Panc1 (cell line): ENCODE measurements at regions of chr17 and their contacts with region 1.

Region 1: GRCh38 chr17:34361478-34362061 is 1.5 kb downstream of the CCL1 start:
- DNase-seq: peak; percentile 78
- ATAC-seq: peak; percentile 97
- H3K4me3 ChIP-seq: no peak overlapping the region
- H3K27ac ChIP-seq: no peak overlapping the region; the same call in 1 of the 2 replicates
- H3K4me1 ChIP-seq: no peaks in the 10 kb centered on the region; the same call in 1 of the 2 replicates
- H3K27me3 ChIP-seq: no peaks in the 10 kb centered on the region
- CTCF ChIP-seq: peak; percentile 99

Region 2: DNA sequence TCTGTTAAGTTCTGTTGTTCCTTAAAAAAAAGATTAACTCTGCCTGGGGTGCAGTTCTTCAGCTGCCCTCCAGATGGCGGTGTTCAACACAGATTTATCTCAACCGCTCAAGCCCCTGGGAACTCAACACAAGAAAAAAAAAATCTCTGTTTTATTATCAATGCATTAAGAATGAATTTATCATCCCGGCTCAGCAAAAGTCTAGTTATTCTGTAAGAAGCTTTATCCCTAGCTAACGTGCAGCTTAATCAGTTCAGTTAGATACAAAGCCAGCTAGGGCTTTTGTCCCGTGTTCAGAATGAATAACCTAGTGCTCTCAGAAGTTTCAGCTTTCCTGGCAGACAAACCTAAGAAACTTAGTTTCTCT is 582.4 kb before region 1 on chr17:
- CTCF ChIA-PET with region 1: no interaction called
- POLR2A ChIA-PET with region 1: no interaction called
- in situ Hi-C with region 1: no loop called
- intact Hi-C with region 1: loop called (anchors 10 kb)
- DNase-seq: peak; percentile 38
- ATAC-seq: peak; percentile 78
- H3K4me3 ChIP-seq: no peak overlapping the region
- H3K27ac ChIP-seq: no peak overlapping the region
- H3K4me1 ChIP-seq: no peaks in the 10 kb centered on the region
- H3K27me3 ChIP-seq: peaks cover 14% of the 10 kb centered on the region
- CTCF ChIP-seq: peak; percentile 90

Region 3: DNA sequence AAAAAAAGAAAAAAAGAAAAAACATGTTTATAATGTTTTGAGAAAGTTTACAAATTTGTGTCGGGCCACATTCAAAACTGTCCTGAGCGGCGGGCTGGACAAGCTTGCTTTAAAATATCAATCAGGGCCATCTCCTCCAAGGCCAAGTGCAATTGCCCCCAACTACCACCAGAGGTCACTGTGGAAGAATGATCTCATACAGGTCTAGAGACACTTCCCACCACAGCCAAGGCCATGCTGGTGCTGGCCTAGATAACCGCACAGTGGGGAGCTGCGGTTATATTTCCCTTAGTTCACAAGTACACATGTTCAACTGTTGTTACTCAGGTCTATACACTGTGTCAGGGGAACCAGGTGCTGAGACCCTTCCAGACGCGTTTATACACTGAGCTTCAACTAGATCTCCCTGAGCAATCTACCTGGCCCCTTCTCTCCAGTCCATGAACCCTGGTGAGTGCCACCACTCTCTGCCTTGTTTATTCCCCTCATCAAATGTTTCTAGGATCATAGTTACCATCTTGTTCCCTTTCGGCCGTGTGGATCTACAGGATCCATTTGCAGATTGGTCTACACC is 190.2 kb before region 1 on chr17:
- CTCF ChIA-PET with region 1: interaction called, 23 read pairs
- POLR2A ChIA-PET with region 1: no interaction called
- in situ Hi-C with region 1: no loop called
- intact Hi-C with region 1: no loop called
- DNase-seq: peak; percentile 48
- ATAC-seq: peak; percentile 91
- H3K4me3 ChIP-seq: no peak overlapping the region
- H3K27ac ChIP-seq: no peak overlapping the region
- H3K4me1 ChIP-seq: no peaks in the 10 kb centered on the region
- H3K27me3 ChIP-seq: no peaks in the 10 kb centered on the region
- CTCF ChIP-seq: peak; percentile 90

Region 4: GRCh38 chr17:34199932-34200534 is 161.5 kb before region 1 on chr17:
- CTCF ChIA-PET with region 1: interaction called, 90 read pairs
- POLR2A ChIA-PET with region 1: no interaction called
- in situ Hi-C with region 1: no loop called
- intact Hi-C with region 1: loop called (anchors 1 kb)
- DNase-seq: peak; percentile 87
- ATAC-seq: peak; percentile 95
- H3K4me3 ChIP-seq: no peak overlapping the region
- H3K27ac ChIP-seq: peak overlapping the region; percentile 78
- H3K4me1 ChIP-seq: peaks cover 3% of the 10 kb centered on the region; the same call in 1 of the 2 replicates
- H3K27me3 ChIP-seq: no peaks in the 10 kb centered on the region
- CTCF ChIP-seq: peak; percentile 99

Region 5: DNA sequence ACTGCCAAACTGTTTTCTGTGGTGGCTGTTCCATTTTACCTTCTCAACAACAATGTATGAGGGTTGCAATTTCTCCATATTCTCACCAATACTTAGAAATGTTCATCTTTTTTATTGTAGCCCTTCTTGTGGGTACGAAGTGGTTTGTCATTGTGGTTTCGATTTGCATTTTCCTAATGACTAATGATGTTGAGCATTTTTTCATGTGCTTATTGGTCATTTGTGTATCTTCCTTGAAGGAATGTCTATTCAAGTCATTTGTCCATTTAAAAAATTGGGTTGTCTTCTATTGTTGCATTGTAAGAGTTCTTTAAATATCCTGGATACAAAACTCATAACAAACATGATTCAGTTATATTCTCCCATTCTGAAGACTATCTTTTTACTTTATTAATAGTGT is 154.0 kb before region 1 on chr17:
- CTCF ChIA-PET with region 1: interaction called, 90 read pairs
- POLR2A ChIA-PET with region 1: no interaction called
- in situ Hi-C with region 1: no loop called
- intact Hi-C with region 1: no loop called
- DNase-seq: no peak
- ATAC-seq: no peak
- H3K4me3 ChIP-seq: no peak overlapping the region
- H3K27ac ChIP-seq: peak overlapping the region; percentile 62
- H3K4me1 ChIP-seq: no peaks in the 10 kb centered on the region; the same call in 1 of the 2 replicates
- H3K27me3 ChIP-seq: no peaks in the 10 kb centered on the region
- CTCF ChIP-seq: no peak

Region 6: DNA sequence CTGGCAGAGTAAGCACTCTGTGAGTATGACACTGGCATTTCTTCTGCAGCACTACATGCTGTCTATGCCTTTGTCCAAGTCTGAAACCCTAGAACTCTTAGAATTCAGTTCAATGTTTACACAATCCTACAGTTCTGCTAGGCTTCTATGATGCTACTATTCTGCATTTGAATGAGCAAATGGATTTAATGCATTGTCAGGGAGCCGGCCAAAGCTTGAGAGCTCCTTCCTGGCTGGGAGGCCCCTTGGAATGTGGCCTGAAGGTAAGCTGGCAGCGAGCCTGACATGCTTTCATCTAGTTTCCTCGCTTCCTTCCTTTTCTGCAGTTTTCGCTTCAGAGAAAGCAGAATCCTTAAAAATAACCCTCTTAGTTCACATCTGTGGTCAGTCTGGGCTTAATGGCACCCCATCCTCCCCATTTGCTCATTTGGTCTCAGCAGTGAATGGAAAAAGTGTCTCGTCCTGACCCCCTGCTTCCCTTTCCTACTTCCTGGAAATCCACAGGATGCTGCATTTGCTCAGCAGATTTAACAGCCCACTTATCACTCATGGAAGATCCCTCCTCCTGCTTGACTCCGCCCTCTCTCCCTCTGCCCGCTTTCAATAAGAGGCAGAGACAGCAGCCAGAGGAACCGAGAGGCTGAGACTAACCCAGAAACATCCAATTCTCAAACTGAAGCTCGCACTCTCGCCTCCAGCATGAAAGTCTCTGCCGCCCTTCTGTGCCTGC is 106.8 kb before region 1 on chr17 and contains the start of gene CCL2:
- CTCF ChIA-PET with region 1: interaction called, 21 read pairs
- POLR2A ChIA-PET with region 1: interaction called, 3 read pairs
- in situ Hi-C with region 1: no loop called
- intact Hi-C with region 1: no loop called
- DNase-seq: no peak
- ATAC-seq: peak; percentile 67
- H3K4me3 ChIP-seq: peak within 1 kb of the TSS; percentile 62 to 81
- H3K27ac ChIP-seq: peak within 1 kb of the TSS; percentile 98
- H3K4me1 ChIP-seq: peaks cover 68% of the 10 kb centered on the region
- H3K27me3 ChIP-seq: no peaks in the 10 kb centered on the region
- CTCF ChIP-seq: no peak
- total RNA-seq, gene CCL2: 513 TPM

Region 7: DNA sequence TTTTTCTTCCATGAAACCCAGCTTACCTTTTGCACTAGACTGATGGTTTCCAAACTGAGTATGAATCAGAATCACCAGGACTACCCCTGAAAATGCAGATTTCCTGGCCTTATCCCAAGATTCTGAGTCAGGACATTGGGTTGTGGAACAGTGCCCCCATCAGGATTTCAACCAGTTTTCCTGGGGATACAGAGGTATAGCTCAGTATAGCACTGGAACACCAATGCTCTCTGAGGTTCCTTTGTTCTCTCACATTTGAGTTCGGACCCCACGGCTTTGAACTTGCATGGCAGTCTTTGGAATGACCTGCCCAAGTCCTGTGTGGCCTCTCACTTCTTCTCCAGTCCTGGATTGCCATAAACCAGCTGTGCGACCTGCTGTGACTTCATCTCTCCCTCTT is 55.1 kb before region 1 on chr17:
- CTCF ChIA-PET with region 1: interaction called, 10 read pairs
- POLR2A ChIA-PET with region 1: no interaction called
- in situ Hi-C with region 1: no loop called
- intact Hi-C with region 1: no loop called
- DNase-seq: no peak
- ATAC-seq: peak; percentile 80; the same call in 1 of the 2 replicates
- H3K4me3 ChIP-seq: no peak overlapping the region
- H3K27ac ChIP-seq: no peak overlapping the region
- H3K4me1 ChIP-seq: no peaks in the 10 kb centered on the region
- H3K27me3 ChIP-seq: no peaks in the 10 kb centered on the region
- CTCF ChIP-seq: peak; percentile 35

Region 8: DNA sequence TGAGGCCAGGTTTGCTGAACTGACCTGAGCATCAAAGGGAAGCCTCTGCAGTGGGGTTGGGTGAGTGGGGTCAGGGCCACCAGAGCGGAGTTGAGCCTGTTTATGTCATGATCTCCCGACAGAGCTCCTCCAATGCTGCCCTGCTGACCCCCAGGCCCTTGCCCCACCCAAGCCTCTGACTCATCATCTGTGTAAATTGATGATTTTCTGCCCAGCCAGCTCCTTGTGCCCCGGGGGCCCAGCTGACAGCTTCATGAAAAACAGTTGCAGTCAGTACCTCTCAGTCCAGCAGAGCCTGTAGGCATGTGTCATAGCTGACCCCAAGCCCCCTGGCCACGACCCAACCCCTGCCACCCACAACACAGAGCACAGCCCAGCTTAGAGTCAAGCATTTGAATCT is 464.8 kb after region 1 on chr17:
- CTCF ChIA-PET with region 1: no interaction called
- POLR2A ChIA-PET with region 1: no interaction called
- in situ Hi-C with region 1: no loop called
- intact Hi-C with region 1: no loop called
- DNase-seq: peak; percentile 41
- ATAC-seq: peak; percentile 68
- H3K4me3 ChIP-seq: no peak overlapping the region
- H3K27ac ChIP-seq: no peak overlapping the region
- H3K4me1 ChIP-seq: no peaks in the 10 kb centered on the region; the same call in 1 of the 2 replicates
- H3K27me3 ChIP-seq: peaks cover 2% of the 10 kb centered on the region; the same call in 1 of the 2 replicates
- CTCF ChIP-seq: no peak